ENCODE measurements at regions of chr12 and their contacts with region 1.

Region 1: GRCh38 chr12:6323340-6323994 is 13.0 kb downstream of the PLEKHG6 start:
- DNase-seq: peak; percentile 45
- ATAC-seq: peak; percentile 59
- H3K4me3 Mint-ChIP-seq: peak overlapping the region; percentile 62
- H3K27ac Mint-ChIP-seq: peak overlapping the region; percentile 98
- H3K4me1 Mint-ChIP-seq: peaks cover 64% of the 10 kb centered on the region
- H3K27me3 Mint-ChIP-seq: no peaks in the 10 kb centered on the region
- CTCF ChIP-seq: no peak

Region 2: DNA sequence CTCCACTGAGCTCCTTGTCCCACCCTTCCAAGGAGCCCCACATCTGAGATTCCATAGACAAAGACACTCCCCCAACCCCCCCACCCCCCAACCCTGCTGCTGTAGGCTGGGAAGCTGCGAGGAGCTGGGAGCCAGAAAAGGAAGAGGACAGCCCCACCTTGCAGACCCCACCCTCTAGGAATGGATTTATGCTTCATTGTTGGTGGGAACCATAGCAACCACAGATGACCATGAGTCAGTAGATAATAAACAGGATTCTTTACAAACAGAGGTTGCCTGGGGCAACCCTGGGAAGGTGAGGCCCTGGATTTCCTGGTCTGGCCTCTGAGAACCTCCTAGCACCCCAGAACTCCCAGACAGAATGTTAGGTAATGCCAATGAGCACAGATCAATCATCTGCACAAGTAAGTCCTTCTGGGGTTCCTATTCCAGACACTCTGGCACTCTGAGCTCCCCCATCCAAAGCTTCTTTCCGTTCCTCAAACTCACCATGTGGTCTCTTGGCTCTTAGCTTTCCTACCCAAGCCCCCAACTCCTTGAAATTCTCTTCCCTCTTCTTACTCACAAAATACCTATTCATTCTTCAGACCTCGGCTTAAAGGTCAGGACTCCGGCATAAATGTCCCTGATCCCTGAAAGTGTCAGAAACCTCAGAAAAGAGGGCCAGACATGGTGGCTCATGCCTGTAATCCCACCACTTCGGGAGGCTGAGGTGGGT is 28.2 kb before region 1 on chr12:
- CTCF ChIA-PET with region 1: no interaction called
- POLR2A ChIA-PET with region 1: no interaction called
- DNase-seq: no peak
- ATAC-seq: no peak
- H3K4me3 Mint-ChIP-seq: no peak overlapping the region
- H3K27ac Mint-ChIP-seq: no peak overlapping the region
- H3K4me1 Mint-ChIP-seq: peaks cover 19% of the 10 kb centered on the region
- H3K27me3 Mint-ChIP-seq: peaks cover 4% of the 10 kb centered on the region; the same call in 1 of the 2 replicates
- CTCF ChIP-seq: no peak

Region 3: DNA sequence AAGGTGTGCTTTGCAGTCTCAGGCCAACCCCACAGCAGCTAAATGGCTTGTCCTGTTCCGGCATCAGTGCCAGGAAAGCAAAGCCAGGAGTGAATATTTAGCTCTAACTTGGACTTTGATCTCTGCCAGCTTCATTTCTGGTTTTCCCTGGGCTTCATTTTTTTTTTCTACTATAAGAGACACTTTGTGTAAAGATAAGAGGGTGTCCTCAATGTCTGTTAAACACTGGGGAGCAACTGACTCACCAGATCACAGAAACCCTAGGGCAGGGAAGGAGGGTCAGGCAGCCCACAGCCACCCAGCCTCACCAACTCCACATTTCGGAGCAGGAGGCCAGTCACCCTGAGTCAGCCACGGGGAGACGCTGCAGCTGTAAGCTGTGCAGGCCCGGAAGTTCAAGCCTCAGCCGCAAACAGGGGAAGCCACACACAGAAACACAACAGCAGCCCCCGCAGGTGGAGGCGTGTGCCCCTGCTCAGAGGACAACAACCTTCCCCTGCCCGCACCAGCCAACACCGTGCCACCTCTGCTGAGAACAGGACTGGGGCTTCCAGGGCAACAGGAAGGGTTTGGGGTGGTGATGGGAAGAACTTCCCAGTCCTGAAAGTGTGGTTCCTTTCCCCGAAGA is 12.1 kb after region 1 on chr12:
- CTCF ChIA-PET with region 1: interaction called, 41 read pairs
- POLR2A ChIA-PET with region 1: interaction called, 16 read pairs
- DNase-seq: peak; percentile 51
- ATAC-seq: peak; percentile 10
- H3K4me3 Mint-ChIP-seq: no peak overlapping the region; the same call in none of the 2 replicates
- H3K27ac Mint-ChIP-seq: no peak overlapping the region
- H3K4me1 Mint-ChIP-seq: peaks cover 18% of the 10 kb centered on the region
- H3K27me3 Mint-ChIP-seq: no peaks in the 10 kb centered on the region
- CTCF ChIP-seq: no peak

Region 4: DNA sequence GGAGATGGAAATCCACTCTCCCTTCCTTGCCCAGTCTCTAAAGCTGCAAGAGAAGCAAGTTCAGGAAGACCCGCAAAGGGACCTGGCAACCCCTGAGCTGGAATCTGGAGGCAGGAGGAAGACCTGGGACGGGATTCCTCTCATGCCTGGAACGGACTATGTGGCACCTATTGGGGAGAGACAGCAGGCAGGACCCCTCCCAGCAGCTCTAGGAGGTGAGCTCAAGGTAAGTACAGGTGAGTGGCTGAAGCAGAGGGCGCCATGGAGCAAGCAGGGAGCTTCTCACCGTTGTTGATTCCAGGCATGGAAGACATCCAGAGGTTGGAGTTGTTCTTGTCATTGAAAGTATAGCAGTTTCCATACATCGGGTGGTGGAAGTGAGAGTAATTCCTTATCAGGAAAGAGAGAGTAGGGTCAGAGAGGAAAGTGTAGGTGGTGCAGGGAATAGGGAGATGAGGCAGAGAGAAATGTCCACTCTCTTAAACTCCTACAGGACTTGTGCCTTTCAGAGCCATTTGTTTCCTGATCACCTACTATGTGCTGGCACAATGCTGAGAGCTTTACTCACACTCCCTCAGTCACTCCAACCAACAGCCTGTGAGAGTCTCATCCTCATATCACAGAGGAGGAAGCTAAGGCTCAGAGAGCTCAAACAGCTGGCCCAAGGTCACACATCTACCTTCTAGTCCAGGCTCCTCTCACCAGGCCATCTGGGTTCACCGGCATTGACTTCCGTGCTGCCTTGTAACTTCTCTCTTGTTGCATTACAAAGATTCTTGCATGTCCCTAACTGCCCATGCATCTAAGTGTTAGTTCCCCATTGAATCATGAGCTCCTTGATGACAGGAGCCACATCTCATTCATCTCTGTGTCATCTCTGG is 32.3 kb after region 1 on chr12:
- CTCF ChIA-PET with region 1: interaction called, 49 read pairs
- POLR2A ChIA-PET with region 1: interaction called, 3 read pairs
- DNase-seq: peak; percentile 73
- ATAC-seq: peak; percentile 96
- H3K4me3 Mint-ChIP-seq: no peak overlapping the region
- H3K27ac Mint-ChIP-seq: peak overlapping the region; percentile 34; the same call in 1 of the 2 replicates
- H3K4me1 Mint-ChIP-seq: peaks cover 25% of the 10 kb centered on the region
- H3K27me3 Mint-ChIP-seq: no peaks in the 10 kb centered on the region
- CTCF ChIP-seq: no peak

Region 5: DNA sequence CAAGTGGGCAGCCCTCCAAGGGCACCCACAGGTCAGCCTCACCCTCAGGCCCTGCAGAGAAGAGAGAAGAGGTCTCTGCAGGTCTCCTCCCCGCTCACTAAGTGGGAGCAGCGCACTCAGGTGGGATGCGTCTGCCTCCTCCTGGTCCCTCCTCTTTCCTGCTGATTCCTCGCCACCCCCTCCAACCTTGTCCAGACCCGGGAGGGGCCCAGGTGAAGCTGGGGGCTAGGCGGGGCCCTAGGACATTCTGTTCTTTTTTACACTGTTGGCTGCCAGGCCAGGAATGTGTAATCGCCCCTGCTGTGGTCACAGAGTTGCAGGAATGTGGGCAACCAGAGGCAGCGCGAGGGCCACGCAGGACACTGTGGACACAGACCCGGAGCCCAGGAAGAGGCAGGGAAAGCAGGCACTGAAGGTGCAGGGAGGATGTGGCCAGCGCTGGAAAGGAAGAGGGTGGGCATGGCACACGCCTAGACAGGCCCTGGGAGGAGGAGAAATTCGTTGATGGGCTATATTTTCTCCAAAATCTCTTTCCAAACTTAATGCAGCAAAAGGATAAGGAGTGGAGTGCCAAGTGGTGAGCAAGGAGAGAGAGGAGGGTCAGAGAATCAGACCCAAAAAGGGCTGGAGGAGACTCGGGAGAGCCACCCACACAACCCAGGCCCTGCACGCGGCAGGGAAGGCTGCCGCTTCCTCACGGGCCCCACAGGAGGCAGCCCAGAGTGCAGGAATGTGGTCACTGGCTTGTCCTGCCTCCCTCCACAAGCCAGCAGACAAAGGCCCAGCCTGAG is 52.8 kb after region 1 on chr12:
- CTCF ChIA-PET with region 1: interaction called, 20 read pairs
- POLR2A ChIA-PET with region 1: interaction called, 9 read pairs
- DNase-seq: peak; percentile 76
- ATAC-seq: peak; percentile 61
- H3K4me3 Mint-ChIP-seq: peak overlapping the region; percentile 91
- H3K27ac Mint-ChIP-seq: peak overlapping the region; percentile 99
- H3K4me1 Mint-ChIP-seq: peaks cover 77% of the 10 kb centered on the region
- H3K27me3 Mint-ChIP-seq: peaks cover 3% of the 10 kb centered on the region
- CTCF ChIP-seq: no peak

Region 6: GRCh38 chr12:6520186-6520585 is 196.7 kb after region 1 on chr12:
- CTCF ChIA-PET with region 1: no interaction called
- POLR2A ChIA-PET with region 1: no interaction called
- DNase-seq: no peak
- ATAC-seq: no peak
- H3K4me3 Mint-ChIP-seq: no peak overlapping the region
- H3K27ac Mint-ChIP-seq: no peak overlapping the region
- H3K4me1 Mint-ChIP-seq: no peaks in the 10 kb centered on the region
- H3K27me3 Mint-ChIP-seq: no peaks in the 10 kb centered on the region
- CTCF ChIP-seq: no peak

Region 7: GRCh38 chr12:6540181-6540877 is 216.9 kb after region 1 on chr12:
- CTCF ChIA-PET with region 1: interaction called, 18 read pairs
- POLR2A ChIA-PET with region 1: no interaction called
- DNase-seq: peak; percentile 88
- ATAC-seq: peak; percentile 55
- H3K4me3 Mint-ChIP-seq: peak overlapping the region; percentile 44
- H3K27ac Mint-ChIP-seq: peak overlapping the region; percentile 92
- H3K4me1 Mint-ChIP-seq: peaks cover 44% of the 10 kb centered on the region
- H3K27me3 Mint-ChIP-seq: no peaks in the 10 kb centered on the region; the same call in 1 of the 2 replicates
- CTCF ChIP-seq: no peak

Measured in WTC11 (cell line).